IMR-90 (cell line): ENCODE measurements at regions of chr12 and their contacts with region 1.

Region 1: DNA sequence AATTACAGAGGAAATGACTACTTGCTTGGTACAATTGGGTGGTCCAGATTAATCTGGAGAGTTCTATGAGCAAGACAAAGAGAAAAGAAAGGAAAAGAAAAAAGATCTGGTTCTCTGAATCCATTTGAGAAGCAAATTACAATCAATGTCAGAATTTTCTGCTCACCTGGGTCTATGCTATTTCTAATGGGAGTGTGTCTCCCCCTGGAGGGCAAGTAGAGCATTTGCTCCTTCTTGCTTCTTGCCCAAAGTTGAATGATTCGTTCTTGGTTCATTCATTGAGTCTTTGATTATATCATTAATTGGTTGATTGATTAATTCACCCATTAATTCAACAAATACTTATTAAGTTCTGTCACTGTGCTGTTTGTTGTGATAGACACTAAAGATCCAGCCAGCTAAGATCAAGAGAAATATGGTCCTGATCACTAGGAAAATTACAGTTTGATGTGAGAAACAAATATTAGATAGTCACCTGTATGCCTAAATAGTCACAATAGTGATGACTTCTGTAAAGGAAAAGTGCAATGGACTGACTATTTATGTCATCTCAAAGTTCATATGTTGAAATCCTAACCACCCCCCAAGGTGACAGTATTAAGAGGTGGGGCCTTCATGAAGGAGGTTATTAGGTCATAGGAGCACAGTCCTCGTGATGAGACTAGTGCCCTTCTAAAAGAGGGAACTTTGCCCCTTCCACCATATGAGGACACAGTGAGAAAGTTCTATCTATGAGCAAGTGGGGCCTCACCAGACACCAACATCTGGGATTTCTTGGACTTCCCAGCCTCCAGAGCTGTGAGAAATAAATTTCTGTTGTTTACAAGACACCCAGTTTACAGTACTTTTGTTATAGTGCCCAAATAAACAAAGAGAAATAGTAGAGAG is 8.0 kb upstream of the ASB8 start:
- DNase-seq: peak; percentile 68
- ATAC-seq: peak; percentile 57; the same call in 1 of the 2 replicates
- H3K4me3 ChIP-seq: no peak overlapping the region
- H3K27ac ChIP-seq: no peak overlapping the region
- H3K4me1 ChIP-seq: no peaks in the 10 kb centered on the region
- H3K27me3 ChIP-seq: peaks cover 7% of the 10 kb centered on the region
- CTCF ChIP-seq: peak; percentile 84
- POLR2A ChIP-seq: no peak
- RAD21 ChIP-seq: peak; percentile 83

Region 2: DNA sequence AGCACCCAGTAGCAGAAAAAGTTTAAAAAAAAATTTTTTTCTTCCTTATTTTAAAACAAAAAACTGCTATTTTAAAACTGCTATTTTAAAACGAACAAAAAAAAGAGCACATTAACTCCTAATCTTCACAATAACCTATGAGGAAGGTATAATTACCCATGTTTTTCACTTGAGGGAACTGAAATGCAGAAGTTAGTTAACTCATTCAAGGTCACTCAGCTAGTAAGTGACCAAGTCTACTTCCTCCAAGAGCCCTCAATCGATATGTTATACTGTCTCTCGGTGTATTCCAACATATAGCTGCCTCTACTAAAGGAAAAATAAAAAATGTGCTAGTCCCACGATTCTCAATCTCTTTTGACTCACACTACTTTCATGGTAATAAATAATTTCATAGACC is 467.3 kb before region 1 on chr12:
- CTCF ChIA-PET with region 1: no interaction called
- POLR2A ChIA-PET with region 1: no interaction called
- dilution Hi-C with region 1: no loop called
- in situ Hi-C with region 1: no loop called
- intact Hi-C with region 1: no loop called
- DNase-seq: no peak
- ATAC-seq: no peak
- H3K4me3 ChIP-seq: no peak overlapping the region
- H3K27ac ChIP-seq: no peak overlapping the region
- H3K4me1 ChIP-seq: no peaks in the 10 kb centered on the region
- H3K27me3 ChIP-seq: no peaks in the 10 kb centered on the region
- CTCF ChIP-seq: no peak
- POLR2A ChIP-seq: no peak
- RAD21 ChIP-seq: no peak

Region 3: DNA sequence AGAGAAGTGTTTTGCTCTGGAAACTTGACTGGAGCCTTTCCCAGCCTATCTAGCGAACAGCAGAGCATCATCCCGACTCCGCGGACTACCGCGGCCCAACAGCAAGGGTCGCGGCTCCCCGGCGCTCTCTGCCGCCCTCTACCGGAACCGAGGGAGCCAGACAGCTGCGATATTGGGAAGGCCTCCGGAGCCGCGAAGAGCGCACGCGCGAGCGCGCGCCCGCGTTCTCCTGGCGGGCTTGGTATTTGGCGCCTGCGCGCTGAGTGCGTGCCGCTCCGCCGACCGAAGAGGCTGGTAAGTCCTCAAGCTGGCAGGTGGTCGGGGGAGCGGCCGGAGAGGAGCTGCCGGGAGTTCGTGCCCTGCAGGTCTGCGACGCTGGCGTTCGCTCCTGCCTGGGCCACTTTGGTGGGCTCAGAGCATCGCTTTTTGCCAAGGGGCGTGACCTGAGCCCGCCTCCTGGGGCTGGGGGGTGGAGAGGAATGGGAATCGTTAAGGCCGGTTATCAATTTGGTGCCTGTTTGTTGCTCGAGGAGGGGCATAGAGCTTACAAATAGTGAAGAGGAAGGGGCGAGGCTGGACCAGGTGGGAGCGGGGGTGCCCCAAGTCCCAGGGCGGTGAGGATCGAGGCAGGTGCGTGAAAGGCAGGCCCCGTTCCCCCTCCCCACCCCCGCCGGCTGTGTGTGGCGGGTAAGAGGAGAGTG is 201.8 kb before region 1 on chr12 and contains the start of gene TMEM106C:
- CTCF ChIA-PET with region 1: no interaction called
- POLR2A ChIA-PET with region 1: no interaction called
- dilution Hi-C with region 1: no loop called
- in situ Hi-C with region 1: no loop called
- intact Hi-C with region 1: loop called (anchors 2 kb)
- DNase-seq: peak; percentile 85
- ATAC-seq: peak; percentile 99
- H3K4me3 ChIP-seq: peak within 1 kb of the TSS; percentile 63
- H3K27ac ChIP-seq: peak within 1 kb of the TSS; percentile 35; the same call in 1 of the 2 replicates
- H3K4me1 ChIP-seq: peaks cover 3% of the 10 kb centered on the region
- H3K27me3 ChIP-seq: peaks cover 8% of the 10 kb centered on the region
- CTCF ChIP-seq: peak; percentile 99
- POLR2A ChIP-seq: no peak
- RAD21 ChIP-seq: peak; percentile 67
- total RNA-seq, gene TMEM106C: 63.9 and 72.1 TPM in 2 replicates

Region 4: GRCh38 chr12:48084066-48084465 is 81.3 kb before region 1 on chr12:
- CTCF ChIA-PET with region 1: no interaction called
- POLR2A ChIA-PET with region 1: no interaction called
- dilution Hi-C with region 1: no loop called
- in situ Hi-C with region 1: no loop called
- intact Hi-C with region 1: loop called (anchors 1 kb)
- DNase-seq: peak; percentile 13
- ATAC-seq: no peak; the same call in 1 of the 2 replicates
- H3K4me3 ChIP-seq: no peak overlapping the region
- H3K27ac ChIP-seq: no peak overlapping the region
- H3K4me1 ChIP-seq: no peaks in the 10 kb centered on the region
- H3K27me3 ChIP-seq: no peaks in the 10 kb centered on the region
- CTCF ChIP-seq: 0 out of 2 replicates have a peak, but pooled peaks have one; percentile 20
- POLR2A ChIP-seq: no peak
- RAD21 ChIP-seq: no peak; the same call in 1 of the 2 replicates